ENCODE measurements at regions of chr12 and their contacts with region 1.

Region 1: GRCh38 chr12:93766796-93767523 is 89.8 kb downstream of the CRADD start:
- DNase-seq: peak; percentile 71
- H3K4me3 Mint-ChIP-seq: no peak overlapping the region
- H3K27ac Mint-ChIP-seq: no peak overlapping the region
- H3K4me1 Mint-ChIP-seq: peaks cover 17% of the 10 kb centered on the region
- H3K27me3 Mint-ChIP-seq: no peaks in the 10 kb centered on the region

Region 2: GRCh38 chr12:93502802-93503623 is 263.9 kb before region 1 on chr12:
- CTCF ChIA-PET with region 1: interaction called, 5 read pairs
- intact Hi-C with region 1: loop called (anchors 1 kb)
- DNase-seq: peak; percentile 75
- H3K4me3 Mint-ChIP-seq: no peak overlapping the region
- H3K27ac Mint-ChIP-seq: no peak overlapping the region
- H3K4me1 Mint-ChIP-seq: peaks cover 17% of the 10 kb centered on the region
- H3K27me3 Mint-ChIP-seq: no peaks in the 10 kb centered on the region

Region 3: DNA sequence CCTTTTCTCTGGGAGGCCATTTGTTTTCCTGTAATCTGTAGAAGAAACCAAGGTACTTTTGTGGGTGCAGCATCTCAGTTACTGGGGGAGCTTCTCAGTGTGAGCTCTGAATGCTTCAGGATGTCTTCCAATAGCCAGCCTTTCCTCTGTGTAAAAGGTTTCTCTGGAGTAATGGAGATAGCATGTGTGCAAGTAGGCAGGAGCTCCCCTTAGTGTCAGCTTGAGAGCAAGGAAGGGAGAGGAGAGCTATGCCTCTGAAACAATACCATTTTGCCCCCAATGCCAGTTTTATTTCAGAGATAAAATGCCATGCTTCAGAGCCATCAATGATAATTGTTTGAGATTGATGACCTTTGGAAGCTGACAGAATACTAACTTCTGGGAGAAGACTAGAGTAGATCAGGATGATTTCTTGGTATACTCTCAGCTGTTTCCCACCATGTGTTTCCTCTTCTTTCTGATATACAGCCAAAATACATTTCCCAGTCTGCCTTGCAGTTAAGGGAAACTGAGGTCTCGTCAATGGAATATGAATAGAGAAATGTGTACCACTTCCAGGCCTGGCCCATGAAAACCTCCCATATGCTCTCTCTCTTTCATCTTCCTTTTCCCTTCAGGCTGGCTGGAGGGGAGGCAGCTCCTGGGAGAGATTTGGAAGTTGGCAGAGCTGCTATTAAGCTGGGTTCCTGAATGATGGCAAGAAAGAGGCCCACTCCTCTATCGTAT is 35.9 kb after region 1 on chr12:
- CTCF ChIA-PET with region 1: interaction called, 6 read pairs
- intact Hi-C with region 1: loop called (anchors 1 kb)
- DNase-seq: no peak
- H3K4me3 Mint-ChIP-seq: no peak overlapping the region
- H3K27ac Mint-ChIP-seq: no peak overlapping the region
- H3K4me1 Mint-ChIP-seq: peaks cover 56% of the 10 kb centered on the region
- H3K27me3 Mint-ChIP-seq: no peaks in the 10 kb centered on the region

Region 4: DNA sequence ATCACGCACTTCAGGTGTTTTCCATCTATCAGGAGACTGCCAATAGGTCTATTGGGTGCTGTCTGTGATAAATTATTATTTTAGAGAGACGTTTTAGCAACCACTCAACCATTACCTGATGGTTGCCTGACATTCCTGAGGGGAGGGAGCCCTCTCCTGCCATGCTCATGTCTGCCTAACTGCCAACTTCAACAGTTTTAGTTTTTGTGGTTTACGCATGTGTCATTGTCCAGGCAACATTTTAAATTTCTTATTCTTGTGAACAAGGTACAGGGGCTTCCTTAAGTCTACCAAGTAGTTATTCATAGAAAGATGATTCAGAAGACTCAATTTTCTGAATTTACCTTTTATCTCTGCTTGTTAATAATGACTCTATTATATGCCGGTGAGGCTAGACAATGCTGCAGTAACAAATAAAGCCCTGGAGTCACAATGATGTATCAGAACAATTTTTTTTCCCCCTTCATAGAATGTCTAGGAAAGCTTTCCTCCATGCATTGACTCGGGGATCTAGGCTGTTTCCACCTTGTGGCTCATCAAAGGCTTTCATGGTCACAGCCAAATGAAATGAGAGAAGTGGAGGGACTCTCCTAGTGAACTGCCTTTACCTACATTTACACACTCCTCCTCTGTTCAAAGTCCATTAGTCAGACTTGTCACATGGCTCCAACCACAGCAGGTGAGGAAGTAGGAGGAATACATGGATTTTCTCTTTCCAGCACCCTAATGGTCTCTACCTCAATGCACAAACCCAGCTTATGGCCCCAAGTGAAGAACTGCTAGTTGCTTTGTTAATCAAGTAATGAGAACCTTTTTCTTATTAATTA is 136.0 kb after region 1 on chr12:
- CTCF ChIA-PET with region 1: no interaction called
- intact Hi-C with region 1: loop called (anchors 5 kb)
- DNase-seq: no peak
- H3K4me3 Mint-ChIP-seq: no peak overlapping the region
- H3K27ac Mint-ChIP-seq: no peak overlapping the region
- H3K4me1 Mint-ChIP-seq: peaks cover 11% of the 10 kb centered on the region
- H3K27me3 Mint-ChIP-seq: no peaks in the 10 kb centered on the region

Region 5: GRCh38 chr12:93979189-93979588 is 212.2 kb after region 1 on chr12:
- CTCF ChIA-PET with region 1: interaction called, 16 read pairs
- intact Hi-C with region 1: loop called (anchors 1 kb)
- DNase-seq: peak; percentile 53
- H3K4me3 Mint-ChIP-seq: no peak overlapping the region
- H3K27ac Mint-ChIP-seq: no peak overlapping the region
- H3K4me1 Mint-ChIP-seq: peaks cover 27% of the 10 kb centered on the region
- H3K27me3 Mint-ChIP-seq: no peaks in the 10 kb centered on the region

Region 6: DNA sequence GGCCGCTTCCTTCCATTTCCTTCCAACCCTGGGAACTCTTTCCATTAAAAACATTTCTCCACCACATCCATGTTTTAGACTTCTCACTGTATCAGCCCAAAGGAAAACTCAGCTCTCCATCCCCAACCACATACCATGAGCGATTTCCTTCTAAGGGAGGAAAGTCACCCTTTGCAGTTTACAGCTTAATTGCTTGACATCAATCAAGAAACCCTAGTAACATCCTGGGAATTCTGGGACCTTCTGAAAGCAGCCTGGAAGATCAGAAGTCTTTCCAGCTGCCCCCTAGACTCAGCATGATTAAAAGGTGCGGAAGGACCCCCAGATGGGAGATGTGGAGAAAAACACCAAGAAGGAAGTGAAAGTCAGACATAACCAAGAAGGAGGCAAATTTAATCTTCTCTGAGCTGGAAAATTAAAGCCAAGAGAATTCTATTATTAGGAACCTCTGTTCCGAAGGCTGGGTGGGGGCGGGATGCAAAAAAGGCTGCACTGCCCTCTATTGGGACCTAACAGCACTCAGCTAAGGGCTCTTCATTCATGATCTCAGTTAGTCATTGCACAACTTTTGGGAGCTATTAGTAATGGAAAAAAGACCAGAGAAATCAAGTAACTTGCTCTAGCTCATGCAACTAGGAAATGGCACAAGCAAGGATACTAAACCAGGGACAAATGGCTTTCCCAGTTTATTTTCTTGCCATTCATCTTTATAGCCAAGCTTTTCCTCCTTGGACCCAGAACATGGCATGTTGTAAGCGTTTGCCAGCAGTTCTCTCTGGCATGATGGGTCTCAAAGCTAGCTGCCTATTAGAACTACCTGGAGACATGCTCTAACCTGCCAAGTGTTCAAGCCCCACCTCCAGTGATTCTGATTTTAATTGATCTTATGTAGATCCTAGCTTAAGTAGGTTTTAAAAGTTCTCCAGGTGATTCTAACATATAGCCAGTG is 308.3 kb after region 1 on chr12:
- CTCF ChIA-PET with region 1: interaction called, 34 read pairs
- intact Hi-C with region 1: loop called (anchors 1 kb)
- DNase-seq: peak; percentile 60
- H3K4me3 Mint-ChIP-seq: no peak overlapping the region
- H3K27ac Mint-ChIP-seq: no peak overlapping the region
- H3K4me1 Mint-ChIP-seq: peaks cover 20% of the 10 kb centered on the region
- H3K27me3 Mint-ChIP-seq: no peaks in the 10 kb centered on the region

Measured in activated naive CD4-positive, alpha-beta T cell treated with anti-CD3 and anti-CD28 coated beads for 36 hours (primary cell).